Sigmoid colon (tissue), 7 donors: ENCODE measurements at regions of chr10 and their contacts with region 1.

Region 1: GRCh38 chr10:95693668-95694534 is at the start of gene TCTN3:
- DNase-seq: peak; percentile 99
- H3K4me3 ChIP-seq: peak within 1 kb of the TSS; percentile 61 to 81 (median 65)
- H3K27ac ChIP-seq: peak within 1 kb of the TSS; percentile 82 to 86 (median 85)
- H3K4me1 ChIP-seq: peaks cover 0 to 17% (median 15%) of the 10 kb centered on the region in 4 donors
- H3K27me3 ChIP-seq: no peaks in the 10 kb centered on the region
- CTCF ChIP-seq: peak; percentile 98 to 100 (median 99)
- EP300 ChIP-seq: no peak
- POLR2A ChIP-seq: peak; percentile 74 to 75
- total RNA-seq, gene TCTN3: 13.2 to 20.5 (median 16.7) TPM

Region 2: GRCh38 chr10:94264085-94264484 is 1429.8 kb before region 1 on chr10:
- intact Hi-C with region 1: no loop called
- DNase-seq: no peak
- H3K4me3 ChIP-seq: no peak overlapping the region
- H3K27ac ChIP-seq: no peak overlapping the region
- H3K4me1 ChIP-seq: no peaks in the 10 kb centered on the region
- H3K27me3 ChIP-seq: no peaks in the 10 kb centered on the region
- CTCF ChIP-seq: no peak
- EP300 ChIP-seq: no peak
- POLR2A ChIP-seq: no peak

Region 3: DNA sequence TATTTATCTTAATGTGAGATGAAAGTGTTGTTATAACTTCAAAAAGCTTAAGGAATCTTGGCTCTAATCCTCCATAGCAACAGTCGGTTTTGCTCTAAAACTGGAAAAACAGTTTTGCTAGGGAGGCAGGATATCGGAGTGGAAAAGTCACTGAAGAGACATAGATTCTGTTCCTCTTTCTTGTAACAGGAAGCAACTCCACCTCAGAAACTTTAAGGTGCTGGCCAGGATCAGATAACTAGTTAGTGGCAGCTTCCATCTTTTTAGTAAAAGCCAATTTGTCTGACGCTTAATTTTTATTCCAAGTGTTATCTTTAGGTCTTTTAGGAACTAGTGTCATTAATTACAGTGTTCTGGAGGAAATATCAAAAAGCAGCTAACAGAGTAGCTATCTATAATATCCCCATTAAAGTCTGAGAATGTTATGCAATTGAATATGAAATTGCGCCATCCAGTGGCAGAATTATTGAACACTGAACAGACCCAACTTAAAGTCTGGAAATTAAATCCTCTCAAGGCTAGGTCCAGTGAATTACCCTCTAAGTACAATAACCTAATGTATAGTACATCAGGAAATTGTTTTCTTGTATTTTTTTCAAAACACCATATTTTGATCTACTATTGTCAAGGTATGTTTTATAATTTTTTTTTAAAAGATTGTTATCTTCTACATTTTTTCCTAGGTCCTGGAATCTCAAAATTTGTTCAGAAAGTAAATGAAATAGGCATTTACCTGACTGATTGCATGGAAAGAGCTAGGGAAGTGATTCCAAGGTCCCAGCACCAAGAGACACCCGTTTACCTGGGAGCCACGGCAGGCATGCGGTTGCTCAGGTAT is 148.0 kb after region 1 on chr10:
- intact Hi-C with region 1: loop called (anchors 1 kb)
- DNase-seq: no peak
- H3K4me3 ChIP-seq: no peak overlapping the region
- H3K27ac ChIP-seq: peak overlapping the region in 3 of 4 donors; percentile 42 to 79 (median 60)
- H3K4me1 ChIP-seq: peaks cover 0 to 31% (median 15%) of the 10 kb centered on the region in 4 donors
- H3K27me3 ChIP-seq: no peaks in the 10 kb centered on the region
- CTCF ChIP-seq: peak; percentile 52 to 64 (median 58)
- EP300 ChIP-seq: no peak
- POLR2A ChIP-seq: no peak

Region 4: DNA sequence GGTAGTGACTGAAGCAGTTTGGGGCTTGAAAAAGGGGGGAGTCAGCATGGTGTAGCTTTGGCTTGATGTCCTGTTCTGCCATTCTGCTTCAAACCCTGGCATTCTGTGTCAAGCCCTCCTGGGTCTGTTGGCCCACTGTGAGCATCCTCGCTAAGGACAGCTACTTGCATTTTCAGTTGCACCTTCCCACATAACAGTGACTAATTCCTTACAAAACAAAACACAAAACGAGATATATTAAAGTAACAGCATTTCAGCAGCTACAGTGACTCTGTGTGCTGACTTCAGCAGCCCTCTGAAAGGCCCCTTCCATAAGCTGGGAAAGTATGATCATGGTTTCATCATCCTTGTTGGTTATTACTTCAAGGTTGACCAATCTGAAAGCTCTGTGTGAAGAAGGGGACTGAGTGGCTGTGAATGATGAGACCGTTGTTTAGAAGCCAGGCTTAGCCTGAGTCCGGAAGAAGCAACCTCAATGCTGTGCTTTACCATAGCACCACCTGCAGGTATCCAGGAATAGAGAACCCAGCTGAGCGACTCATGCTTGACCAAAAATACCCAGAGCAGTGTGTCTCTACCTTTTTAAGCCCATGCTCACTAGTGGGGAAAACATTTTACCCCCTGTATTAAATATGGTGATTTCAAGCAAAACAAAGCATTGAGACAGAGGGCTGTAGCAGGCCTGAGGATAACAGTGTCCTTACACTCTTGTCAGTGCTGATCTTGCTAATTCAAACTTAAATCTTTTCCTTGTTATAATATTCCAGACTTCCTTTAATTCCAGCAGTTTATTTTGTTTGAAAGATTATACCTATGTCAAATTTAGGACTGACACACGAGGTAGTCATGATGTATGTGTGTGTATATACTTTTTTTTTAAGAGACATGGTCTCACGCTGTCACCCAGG is 171.3 kb after region 1 on chr10:
- intact Hi-C with region 1: loop called (anchors 1 kb)
- DNase-seq: no peak
- H3K4me3 ChIP-seq: no peak overlapping the region
- H3K27ac ChIP-seq: peak overlapping the region; percentile 5 to 32 (median 24)
- H3K4me1 ChIP-seq: peaks cover 0 to 17% (median 8%) of the 10 kb centered on the region in 4 donors
- H3K27me3 ChIP-seq: no peaks in the 10 kb centered on the region
- CTCF ChIP-seq: peak; percentile 27 to 54 (median 40)
- EP300 ChIP-seq: no peak
- POLR2A ChIP-seq: no peak

Region 5: GRCh38 chr10:95907456-95908253 is 213.8 kb after region 1 on chr10 and contains the start of gene CC2D2B:
- intact Hi-C with region 1: loop called (anchors 1 kb)
- DNase-seq: peak; percentile 90
- H3K4me3 ChIP-seq: peak within 1 kb of the TSS; percentile 43 to 70 (median 64)
- H3K27ac ChIP-seq: peak within 1 kb of the TSS; percentile 85 to 93 (median 90)
- H3K4me1 ChIP-seq: peaks cover 0 to 10% (median 4%) of the 10 kb centered on the region in 4 donors
- H3K27me3 ChIP-seq: no peaks in the 10 kb centered on the region
- CTCF ChIP-seq: no peak
- EP300 ChIP-seq: no peak
- POLR2A ChIP-seq: no peak
- total RNA-seq, gene CC2D2B: 1.5 to 7.8 (median 4.8) TPM

Region 6: GRCh38 chr10:96292971-96293920 is 599.3 kb after region 1 on chr10:
- intact Hi-C with region 1: loop called (anchors 5 kb)
- DNase-seq: no peak
- H3K4me3 ChIP-seq: no peak overlapping the region
- H3K27ac ChIP-seq: no peak overlapping the region
- H3K4me1 ChIP-seq: peaks cover 0 to under 1% (median under 1%) of the 10 kb centered on the region in 4 donors
- H3K27me3 ChIP-seq: no peaks in the 10 kb centered on the region
- CTCF ChIP-seq: peak in 3 of 4 experiments; percentile 28 to 52 (median 44)
- EP300 ChIP-seq: no peak
- POLR2A ChIP-seq: no peak